H1 (cell line): ENCODE measurements at regions of chr7 and their contacts with region 1.

Region 1: DNA sequence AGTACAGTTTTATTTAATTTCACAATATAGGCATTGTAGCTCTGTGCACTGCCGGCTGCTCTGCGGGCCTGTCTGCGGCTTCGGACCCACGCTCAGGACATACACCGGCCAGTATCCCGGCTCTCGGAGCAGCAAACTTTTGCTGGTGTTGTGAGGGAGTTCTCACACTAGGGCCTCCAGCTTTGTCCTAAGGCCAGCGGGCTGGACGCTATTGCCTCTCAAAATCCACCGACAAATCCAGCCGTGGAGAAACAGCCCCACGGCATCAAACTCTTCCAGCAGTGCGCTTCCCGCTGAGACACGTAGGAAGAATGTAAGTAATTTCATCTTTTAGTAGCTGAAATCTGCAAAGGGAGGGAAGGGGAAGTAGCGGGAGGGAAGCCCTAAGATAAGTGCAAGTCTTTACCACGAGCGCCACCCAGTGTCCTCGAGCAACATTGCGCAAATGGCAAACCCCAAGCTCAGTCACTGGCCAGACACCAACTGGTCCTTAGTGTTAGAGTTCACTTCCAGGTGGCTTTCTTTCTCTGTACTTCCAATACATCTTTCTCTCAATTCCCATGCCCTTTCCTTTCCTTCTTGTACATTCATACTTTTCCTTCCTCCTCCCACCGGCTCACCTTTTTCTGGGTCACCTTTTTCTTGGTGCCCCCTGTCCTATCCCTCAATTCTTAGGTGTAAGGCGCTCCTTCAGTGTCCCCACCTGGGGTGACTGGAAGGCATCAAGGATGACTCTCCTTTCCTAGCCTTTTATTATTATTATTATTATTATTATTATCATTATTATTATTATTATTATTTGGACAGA is 3.0 kb upstream of the DLX5 start:
- DNase-seq: peak in 1 of 2 experiments; percentile 88
- H3K4me3 ChIP-seq: peak overlapping the region in 3 of 4 experiments; percentile 42 to 57 (median 49); a peak in 6 of 8 replicates
- H3K27ac ChIP-seq: no peak overlapping the region
- H3K4me1 ChIP-seq: peaks cover 24 to 33% (median 24%) of the 10 kb centered on the region in 4 experiments
- H3K27me3 ChIP-seq: peaks cover 42 to 55% (median 51%) of the 10 kb centered on the region in 4 experiments
- CTCF ChIP-seq: peak; percentile 78 to 95 (median 95)
- EP300 ChIP-seq: no peak
- POLR2A ChIP-seq: no peak
- RAD21 ChIP-seq: peak; percentile 96 to 97

Region 2: GRCh38 chr7:95916573-95917297 is 1110.9 kb before region 1 on chr7:
- CTCF ChIA-PET with region 1: interaction called, 16 read pairs
- POLR2A ChIA-PET with region 1: no interaction called
- DNase-seq: peak; percentile 34 to 93
- H3K4me3 ChIP-seq: no peak overlapping the region
- H3K27ac ChIP-seq: no peak overlapping the region
- H3K4me1 ChIP-seq: no peaks in the 10 kb centered on the region
- H3K27me3 ChIP-seq: no peaks in the 10 kb centered on the region
- CTCF ChIP-seq: peak; percentile 51 to 82 (median 79)
- EP300 ChIP-seq: no peak
- POLR2A ChIP-seq: no peak
- RAD21 ChIP-seq: peak; percentile 87 to 93

Region 3: DNA sequence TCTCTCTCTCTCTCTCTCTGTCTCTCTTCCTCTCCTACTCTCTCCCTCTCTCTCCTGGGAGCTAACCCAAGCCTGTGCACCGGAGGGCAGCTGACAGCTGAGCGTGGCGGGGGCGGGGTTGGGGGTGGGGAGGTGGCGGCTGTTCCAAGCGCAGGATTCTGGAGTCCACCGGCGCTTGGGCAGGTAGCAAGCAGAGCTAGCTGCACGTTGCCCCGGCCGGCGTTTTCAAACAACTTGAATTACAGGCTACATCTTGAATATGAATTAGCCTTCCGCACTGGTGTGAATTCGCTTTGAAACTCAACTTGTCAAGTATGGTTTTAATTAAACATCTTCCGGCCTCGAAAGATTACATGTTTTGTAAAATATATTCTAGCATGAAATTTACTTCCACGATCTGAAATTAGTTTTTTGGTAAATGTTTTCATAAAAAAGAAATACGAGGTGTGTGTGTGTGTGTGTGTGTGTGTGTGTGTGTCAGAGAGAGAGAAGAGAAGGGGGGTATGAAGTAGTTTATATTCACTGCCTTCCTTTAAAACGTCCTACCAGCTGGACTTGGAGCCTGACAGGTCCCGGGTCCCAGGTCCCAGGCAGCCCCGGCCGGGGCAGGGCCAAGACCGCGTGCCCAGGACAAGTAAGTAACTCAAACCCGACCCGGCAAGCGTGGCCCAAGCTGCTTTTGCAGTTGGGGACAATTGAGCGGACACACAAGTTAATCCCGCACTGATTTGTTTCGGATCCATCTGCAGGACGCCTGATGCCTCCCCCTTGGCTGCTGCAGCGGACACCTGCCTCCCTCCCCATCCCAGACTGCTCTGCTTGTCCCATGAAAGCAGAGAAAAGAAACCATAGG is 31.3 kb before region 1 on chr7:
- CTCF ChIA-PET with region 1: interaction called, 150 read pairs
- POLR2A ChIA-PET with region 1: interaction called, 5 read pairs
- DNase-seq: peak in 1 of 2 experiments; percentile 56
- H3K4me3 ChIP-seq: peak overlapping the region in 1 of 4 experiments; percentile 41; a peak in 2 of 8 replicates
- H3K27ac ChIP-seq: no peak overlapping the region
- H3K4me1 ChIP-seq: peaks cover 12 to 39% (median 25%) of the 10 kb centered on the region in 4 experiments
- H3K27me3 ChIP-seq: peaks cover 88 to 99% (median 95%) of the 10 kb centered on the region in 4 experiments
- CTCF ChIP-seq: no peak
- EP300 ChIP-seq: no peak
- POLR2A ChIP-seq: no peak
- RAD21 ChIP-seq: no peak

Region 4: DNA sequence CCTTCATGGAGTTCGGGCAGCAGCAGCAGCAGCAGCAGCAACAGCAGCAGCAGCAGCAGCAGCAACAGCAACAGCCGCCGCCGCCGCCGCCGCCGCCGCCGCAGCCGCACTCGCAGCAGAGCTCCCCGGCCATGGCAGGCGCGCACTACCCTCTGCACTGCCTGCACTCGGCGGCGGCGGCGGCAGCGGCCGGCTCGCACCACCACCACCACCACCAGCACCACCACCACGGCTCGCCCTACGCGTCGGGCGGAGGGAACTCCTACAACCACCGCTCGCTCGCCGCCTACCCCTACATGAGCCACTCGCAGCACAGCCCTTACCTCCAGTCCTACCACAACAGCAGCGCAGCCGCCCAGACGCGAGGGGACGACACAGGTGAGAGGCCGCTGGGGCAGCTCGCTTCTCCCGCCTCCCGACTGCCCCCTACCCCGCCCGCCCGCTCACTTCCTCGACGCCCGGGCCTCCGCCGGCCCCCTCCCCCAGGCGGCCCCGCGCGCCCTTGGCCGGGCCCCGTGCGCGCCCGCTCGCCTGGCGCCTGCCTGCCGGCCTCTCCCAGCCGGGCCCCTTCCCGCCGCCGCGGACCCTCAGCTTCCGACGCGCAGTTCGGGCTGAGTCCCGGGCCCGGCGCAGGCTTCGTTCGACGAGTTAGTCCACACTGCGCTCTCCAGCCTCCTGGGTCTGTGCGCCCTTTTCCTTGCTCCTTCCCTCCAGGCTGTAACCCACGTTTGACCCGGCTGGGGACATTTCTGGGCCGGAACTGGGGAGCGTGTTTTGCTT is 21.4 kb before region 1 on chr7:
- CTCF ChIA-PET with region 1: interaction called, 150 read pairs
- POLR2A ChIA-PET with region 1: interaction called, 13 read pairs
- DNase-seq: peak in 1 of 2 experiments; percentile 85
- H3K4me3 ChIP-seq: peak overlapping the region; percentile 26 to 58 (median 50)
- H3K27ac ChIP-seq: no peak overlapping the region
- H3K4me1 ChIP-seq: peaks cover 9 to 27% (median 18%) of the 10 kb centered on the region in 4 experiments
- H3K27me3 ChIP-seq: peaks cover 73 to 95% (median 88%) of the 10 kb centered on the region in 4 experiments
- CTCF ChIP-seq: 0 out of 4 replicates have a peak, but pooled peaks of 1 of the 3 experiments have one; percentile 4
- EP300 ChIP-seq: 0 out of 3 replicates have a peak, but pooled peaks of 1 of the 2 experiments have one; percentile 38
- POLR2A ChIP-seq: no peak
- RAD21 ChIP-seq: no peak

Region 5: DNA sequence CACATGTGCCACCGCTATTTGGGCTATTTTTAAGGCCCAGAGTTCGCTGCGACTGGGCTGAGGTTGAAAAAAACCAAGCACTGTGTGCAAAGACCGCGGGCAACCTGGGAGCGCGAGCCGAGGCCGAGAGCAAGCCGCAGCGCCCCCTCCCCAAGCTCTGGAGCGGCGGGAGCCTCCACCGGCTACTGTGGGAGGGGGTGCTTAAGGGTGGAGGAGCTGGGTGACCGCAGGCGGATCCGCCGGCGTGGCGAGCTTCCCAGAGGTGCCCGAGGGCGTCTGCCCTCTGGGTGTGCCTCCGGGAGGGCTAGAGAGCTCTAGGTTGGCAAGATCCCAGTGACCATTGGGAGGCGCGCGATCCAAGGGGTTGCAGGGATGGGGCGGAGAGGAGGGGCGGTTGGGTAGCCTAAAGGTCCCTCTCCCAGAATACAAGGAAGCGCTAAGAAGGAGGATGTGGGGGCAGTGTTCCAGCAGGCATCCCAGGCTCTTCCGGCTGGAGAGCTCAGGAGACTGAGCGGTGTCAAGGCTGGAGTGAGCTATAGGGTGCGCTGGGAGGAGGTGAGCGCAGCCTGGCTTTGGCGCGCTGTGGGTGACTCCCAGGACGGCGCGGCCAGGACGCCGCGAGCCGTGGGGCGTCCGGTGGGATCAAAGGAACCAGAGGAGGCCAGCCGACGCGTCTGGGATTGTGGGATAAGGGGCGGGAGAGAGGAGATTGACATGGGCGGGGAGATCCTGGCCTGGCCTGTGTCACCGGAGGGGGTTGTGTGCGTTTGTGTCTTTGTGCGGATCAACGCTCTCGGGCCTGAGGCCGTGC is 11.0 kb before region 1 on chr7:
- CTCF ChIA-PET with region 1: interaction called, 85 read pairs
- POLR2A ChIA-PET with region 1: interaction called, 6 read pairs
- DNase-seq: peak in 1 of 2 experiments; percentile 84
- H3K4me3 ChIP-seq: peak overlapping the region; percentile 22 to 52 (median 33); a peak in 6 of 8 replicates
- H3K27ac ChIP-seq: no peak overlapping the region
- H3K4me1 ChIP-seq: peaks cover 0 to 20% (median 13%) of the 10 kb centered on the region in 4 experiments; a peak in 5 of 7 replicates
- H3K27me3 ChIP-seq: peaks cover 94 to 100% (median 99%) of the 10 kb centered on the region in 4 experiments
- CTCF ChIP-seq: peak; percentile 51 to 57 (median 52)
- EP300 ChIP-seq: no peak
- POLR2A ChIP-seq: no peak
- RAD21 ChIP-seq: peak; percentile 62 to 70